ENCODE measurements at regions of chr4 and their contacts with region 1.

Region 1: GRCh38 chr4:159446266-159446976 is 343.5 kb downstream of the RAPGEF2 start:
- DNase-seq: peak; percentile 10
- H3K4me3 Mint-ChIP-seq: no peak overlapping the region
- H3K27ac Mint-ChIP-seq: peak overlapping the region; percentile 35
- H3K4me1 Mint-ChIP-seq: no peaks in the 10 kb centered on the region
- H3K27me3 Mint-ChIP-seq: peaks cover 6% of the 10 kb centered on the region

Region 2: GRCh38 chr4:158253350-158253980 is 1193.0 kb before region 1 on chr4:
- intact Hi-C with region 1: loop called (anchors 1 kb)
- DNase-seq: peak; percentile 26
- H3K4me3 Mint-ChIP-seq: no peak overlapping the region
- H3K27ac Mint-ChIP-seq: no peak overlapping the region
- H3K4me1 Mint-ChIP-seq: peaks cover 10% of the 10 kb centered on the region
- H3K27me3 Mint-ChIP-seq: peaks cover 7% of the 10 kb centered on the region

Region 3: GRCh38 chr4:158671915-158672806 is 774.3 kb before region 1 on chr4 and contains the start of gene ETFDH:
- intact Hi-C with region 1: loop called (anchors 5 kb)
- DNase-seq: peak; percentile 98
- H3K4me3 Mint-ChIP-seq: peak within 1 kb of the TSS; percentile 99
- H3K27ac Mint-ChIP-seq: peak within 1 kb of the TSS; percentile 96
- H3K4me1 Mint-ChIP-seq: peaks cover 46% of the 10 kb centered on the region
- H3K27me3 Mint-ChIP-seq: peaks cover 2% of the 10 kb centered on the region
- total RNA-seq, gene ETFDH: 19.9 and 21.5 TPM in 2 replicates

Region 4: DNA sequence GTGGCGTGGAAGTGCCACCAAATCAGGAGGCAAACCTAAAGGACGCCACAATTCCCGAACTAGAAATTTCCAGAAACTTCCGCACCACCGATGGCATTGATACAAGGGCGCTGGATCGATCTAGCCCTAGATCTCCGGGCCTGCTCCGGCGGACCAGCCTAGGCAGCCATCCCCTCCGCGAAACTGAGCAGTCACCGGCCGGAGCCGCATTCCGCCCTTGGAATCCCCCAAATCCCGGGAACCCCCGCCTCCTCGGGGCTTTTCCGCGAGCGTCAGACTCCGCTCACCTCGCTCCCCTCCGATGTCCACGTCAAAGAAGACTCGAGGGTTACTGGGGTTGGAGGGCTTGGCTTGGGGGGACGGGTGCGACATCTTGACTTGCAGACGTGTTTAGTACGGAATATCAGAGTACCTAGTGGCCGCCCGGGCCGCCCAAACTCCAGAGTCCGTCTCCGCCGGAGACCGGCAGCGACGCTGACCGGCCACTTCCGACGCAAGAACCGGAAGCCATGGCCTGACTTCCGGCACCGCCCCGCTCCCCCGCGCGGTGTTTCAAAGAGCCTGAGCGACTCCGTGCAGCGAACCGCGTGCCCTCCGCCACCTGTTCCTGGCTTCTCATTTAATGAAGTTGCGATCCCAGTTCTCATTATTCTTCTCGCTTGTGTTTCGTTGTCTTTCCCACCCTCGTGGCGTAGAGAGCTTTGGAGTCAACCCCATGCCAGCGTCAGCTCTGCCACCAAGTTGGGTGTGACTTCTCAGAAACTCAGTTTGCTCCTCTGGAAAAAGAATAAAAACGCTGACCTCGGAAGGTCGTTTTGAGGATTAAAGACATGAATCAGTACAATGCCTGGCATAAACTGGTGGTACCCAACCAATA is 723.3 kb before region 1 on chr4 and contains the start of gene PPID:
- intact Hi-C with region 1: loop called (anchors 5 kb)
- DNase-seq: peak; percentile 80
- H3K4me3 Mint-ChIP-seq: peak within 1 kb of the TSS; percentile 95
- H3K27ac Mint-ChIP-seq: peak within 1 kb of the TSS; percentile 100
- H3K4me1 Mint-ChIP-seq: peaks cover 59% of the 10 kb centered on the region
- H3K27me3 Mint-ChIP-seq: peaks cover 5% of the 10 kb centered on the region
- total RNA-seq, gene PPID: 52.8 and 55.4 TPM in 2 replicates

Region 5: DNA sequence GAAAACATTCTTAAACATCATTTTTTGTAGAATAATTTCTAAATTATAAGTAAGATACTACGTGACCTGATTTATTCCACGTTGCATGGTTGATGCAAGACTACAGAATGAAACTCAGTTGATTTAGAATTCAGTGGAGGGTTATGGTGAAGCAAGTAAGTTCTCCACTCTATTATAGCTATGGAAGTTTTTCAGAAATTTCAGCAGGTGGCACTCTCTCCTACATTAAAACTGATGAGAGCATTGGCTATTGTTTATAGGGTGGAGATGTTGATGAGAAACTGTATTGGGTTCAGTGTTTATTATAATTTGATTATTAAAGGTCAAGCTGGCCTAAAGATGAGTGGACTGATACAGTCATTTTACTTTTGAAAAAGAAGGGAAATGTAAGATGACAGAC is 589.6 kb before region 1 on chr4:
- intact Hi-C with region 1: loop called (anchors 1 kb)
- DNase-seq: no peak
- H3K4me3 Mint-ChIP-seq: no peak overlapping the region
- H3K27ac Mint-ChIP-seq: no peak overlapping the region
- H3K4me1 Mint-ChIP-seq: peaks cover 12% of the 10 kb centered on the region
- H3K27me3 Mint-ChIP-seq: no peaks in the 10 kb centered on the region

Region 6: DNA sequence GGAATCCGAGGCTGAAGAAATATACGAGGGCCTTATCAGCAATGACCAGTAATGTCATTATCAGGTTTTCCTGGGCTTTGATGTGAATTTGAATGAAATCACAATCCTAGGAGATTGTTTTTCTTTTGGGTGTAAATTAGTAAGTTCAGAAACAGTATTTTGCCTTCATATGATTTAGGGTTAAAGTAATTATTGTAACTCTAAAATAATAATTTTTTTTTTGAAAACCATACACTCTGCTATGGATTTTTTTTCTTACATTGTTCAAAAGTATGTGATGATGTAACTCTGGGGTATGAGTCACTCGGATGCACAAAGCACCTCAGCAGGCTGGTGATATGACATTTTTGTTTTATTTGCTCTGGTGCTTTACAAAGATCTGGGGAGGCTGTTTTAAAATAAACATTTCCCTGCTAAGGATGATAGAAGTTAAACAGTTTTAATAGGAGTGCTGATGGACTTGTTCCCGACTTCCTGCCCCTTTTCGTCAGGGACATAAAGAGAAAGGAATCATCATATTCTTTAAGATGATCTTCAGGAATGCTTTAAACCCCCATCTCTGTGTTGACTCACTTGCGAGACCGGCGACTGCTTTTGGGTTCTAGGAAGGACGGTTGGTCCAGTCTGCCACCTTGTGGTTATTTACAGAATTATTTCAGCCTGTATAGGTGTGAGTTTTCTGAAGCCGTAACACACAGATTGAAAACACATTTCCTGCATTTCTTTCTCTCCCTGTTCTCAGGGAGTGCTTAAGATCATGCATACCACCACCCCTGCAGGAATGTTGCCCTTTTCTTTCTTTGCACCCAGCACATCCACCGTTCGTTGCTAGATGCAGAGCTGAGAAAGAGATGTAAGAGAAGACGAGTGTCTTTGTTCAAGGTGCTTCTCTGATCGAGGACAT is 271.1 kb before region 1 on chr4:
- intact Hi-C with region 1: loop called (anchors 5 kb)
- DNase-seq: peak; percentile 51
- H3K4me3 Mint-ChIP-seq: no peak overlapping the region
- H3K27ac Mint-ChIP-seq: peak overlapping the region; percentile 49
- H3K4me1 Mint-ChIP-seq: peaks cover 64% of the 10 kb centered on the region
- H3K27me3 Mint-ChIP-seq: no peaks in the 10 kb centered on the region

Measured in activated T-helper 1 cell treated with anti-CD3 and anti-CD28 coated beads, Interleukin-12 subunit alpha, Interleukin-12 subunit beta, Interleukin-2, Interleukin-4 antibody, amounts not matched to agents 30 ng/mL and 10 ng/mL and 1 ng/mL, durations not matched to agents 14 hours and 24 hours and 36 hours (primary cell).